ENCODE measurements at regions of chr3 and their contacts with region 1.

Region 1: GRCh38 chr3:157174649-157175498 is 14.9 kb upstream of the CCNL1 start:
- DNase-seq: peak; percentile 98 to 100
- H3K4me3 ChIP-seq: peak overlapping the region; percentile 62 to 70
- H3K27ac ChIP-seq: peak overlapping the region; percentile 86 to 94
- H3K4me1 ChIP-seq: peaks cover 0 to 17% (median 15%) of the 10 kb centered on the region in 4 donors
- H3K27me3 ChIP-seq: no peaks in the 10 kb centered on the region
- CTCF ChIP-seq: no peak

Region 2: DNA sequence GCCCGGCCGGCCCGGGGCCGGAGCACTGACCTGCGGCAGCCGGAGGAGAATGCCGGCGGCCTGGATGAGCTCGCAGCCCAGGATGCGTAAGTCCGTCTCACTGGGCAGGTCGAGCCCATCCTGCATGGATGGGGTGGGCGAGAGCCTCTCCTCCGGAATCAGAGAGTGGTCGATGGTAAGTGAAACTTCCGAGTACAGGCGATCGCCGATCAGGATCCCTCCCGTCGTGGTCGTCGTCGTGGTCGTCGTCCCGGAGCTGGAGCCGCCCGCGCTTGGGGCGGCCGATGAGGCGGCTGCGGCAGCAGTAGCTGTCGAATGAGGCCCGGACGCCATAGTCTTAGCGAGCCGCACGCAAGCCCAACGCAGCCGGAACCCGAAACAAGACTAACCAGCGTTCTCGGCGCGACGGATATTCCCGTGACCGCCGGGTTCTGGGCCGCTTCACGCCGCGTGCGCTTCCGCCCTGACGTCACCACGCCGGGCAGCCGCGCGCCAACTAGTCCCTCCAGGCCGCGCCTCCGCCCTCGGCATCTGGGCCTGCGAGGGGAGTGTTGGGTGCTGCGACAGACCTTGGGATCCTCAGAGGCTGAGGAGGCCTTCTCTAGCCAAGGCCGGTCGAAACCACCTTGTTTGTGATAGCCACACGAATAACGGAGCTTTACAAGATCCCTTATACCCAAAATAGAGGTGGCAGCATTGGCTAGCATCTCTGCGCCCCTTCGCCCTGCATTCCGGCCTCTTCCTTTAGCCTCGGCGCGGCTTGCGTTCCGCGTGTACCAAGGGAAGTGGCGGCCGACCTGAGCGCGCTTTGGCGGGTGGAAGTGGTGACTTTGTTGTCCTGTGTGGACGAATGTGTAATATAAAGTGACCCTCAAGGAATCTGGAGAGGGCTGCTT is 14.9 kb before region 1 on chr3 and contains the start of gene CCNL1:
- intact Hi-C with region 1: loop called (anchors 1 kb)
- DNase-seq: peak; percentile 94 to 98
- H3K4me3 ChIP-seq: peak within 1 kb of the TSS; percentile 87 to 99
- H3K27ac ChIP-seq: peak within 1 kb of the TSS; percentile 99 to 100
- H3K4me1 ChIP-seq: peaks cover 6 to 48% (median 40%) of the 10 kb centered on the region in 4 donors
- H3K27me3 ChIP-seq: no peaks in the 10 kb centered on the region
- CTCF ChIP-seq: peak in 1 of 2 experiments; percentile 12